Heart left ventricle (tissue), 16 donors: ENCODE measurements at regions of chr4 and their contacts with region 1.

Region 1: DNA sequence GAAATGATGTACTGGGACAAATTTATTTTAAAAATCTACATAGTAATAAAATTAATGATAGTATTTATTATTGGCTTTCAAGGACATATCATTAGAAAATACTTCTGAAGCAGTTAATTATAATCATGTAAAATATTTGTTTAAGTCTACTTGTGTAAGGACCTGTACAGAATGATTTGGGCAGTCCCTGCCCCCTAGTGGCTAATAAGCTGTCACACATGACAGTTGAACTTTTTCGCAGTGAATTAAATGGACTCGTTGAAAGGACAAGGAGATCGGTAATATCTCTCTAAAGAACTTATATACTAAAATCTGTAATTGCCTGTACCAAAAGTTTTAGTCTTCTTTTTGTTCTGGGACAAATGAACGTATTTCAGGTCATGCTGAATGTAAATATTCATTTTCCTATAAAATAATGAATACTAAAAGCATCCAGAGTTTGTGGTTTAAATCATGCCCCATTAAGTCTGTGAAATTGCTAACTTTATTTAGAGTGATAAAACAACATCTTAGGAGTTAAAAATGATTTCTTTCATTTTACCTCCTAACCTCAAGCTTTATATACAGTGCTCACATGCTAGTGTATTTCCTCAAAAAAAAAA is 13.6 kb downstream of the EXOC1 start:
- DNase-seq: no peak
- ATAC-seq: peak; percentile 79 to 91 (median 85)
- H3K4me3 ChIP-seq: peak overlapping the region in 1 of 12 donors; percentile 9
- H3K27ac ChIP-seq: peak overlapping the region in 8 of 12 donors; percentile 22 to 76 (median 58)
- H3K4me1 ChIP-seq: peaks cover 0 to 30% (median 15%) of the 10 kb centered on the region in 12 donors
- H3K27me3 ChIP-seq: no peaks in the 10 kb centered on the region
- CTCF ChIP-seq: peak; percentile 74 to 92 (median 86)
- POLR2A ChIP-seq: no peak

Region 2: GRCh38 chr4:54971474-54971950 is 895.6 kb before region 1 on chr4:
- intact Hi-C with region 1: loop called in 1 of 10 experiments (anchors 10 kb)
- DNase-seq: no peak
- ATAC-seq: peak in 3 of 4 donors; percentile 65 to 85 (median 69)
- H3K4me3 ChIP-seq: no peak overlapping the region
- H3K27ac ChIP-seq: no peak overlapping the region
- H3K4me1 ChIP-seq: peaks cover 0 to 3% (median 0%) of the 10 kb centered on the region in 12 donors
- H3K27me3 ChIP-seq: no peaks in the 10 kb centered on the region
- CTCF ChIP-seq: peak; percentile 58 to 82 (median 74)
- POLR2A ChIP-seq: no peak

Region 3: GRCh38 chr4:54999003-54999402 is 868.1 kb before region 1 on chr4:
- intact Hi-C with region 1: loop called in 1 of 10 experiments (anchors 5 kb)
- DNase-seq: no peak
- ATAC-seq: peak in 1 of 4 donors; percentile 74
- H3K4me3 ChIP-seq: no peak overlapping the region
- H3K27ac ChIP-seq: no peak overlapping the region
- H3K4me1 ChIP-seq: peaks cover 0 to 7% (median 2%) of the 10 kb centered on the region in 12 donors
- H3K27me3 ChIP-seq: no peaks in the 10 kb centered on the region
- CTCF ChIP-seq: peak; percentile 25 to 70 (median 58)
- POLR2A ChIP-seq: no peak

Region 4: GRCh38 chr4:55345980-55346850 is 520.9 kb before region 1 on chr4 and contains the start of gene SRD5A3:
- intact Hi-C with region 1: loop called in 5 of 10 experiments (anchors 2 to 10 kb)
- DNase-seq: peak; percentile 86 to 94 (median 88)
- ATAC-seq: peak; percentile 94 to 98 (median 96)
- H3K4me3 ChIP-seq: peak within 1 kb of the TSS; percentile 48 to 97 (median 80)
- H3K27ac ChIP-seq: peak within 1 kb of the TSS; percentile 89 to 100 (median 98)
- H3K4me1 ChIP-seq: peaks cover 4 to 31% (median 16%) of the 10 kb centered on the region in 12 donors
- H3K27me3 ChIP-seq: no peaks in the 10 kb centered on the region
- CTCF ChIP-seq: peak; percentile 90 to 99 (median 98)
- POLR2A ChIP-seq: peak in 1 of 2 donors; percentile 72
- total RNA-seq, gene SRD5A3: 4.5 to 16.8 (median 7.8) TPM

Region 5: DNA sequence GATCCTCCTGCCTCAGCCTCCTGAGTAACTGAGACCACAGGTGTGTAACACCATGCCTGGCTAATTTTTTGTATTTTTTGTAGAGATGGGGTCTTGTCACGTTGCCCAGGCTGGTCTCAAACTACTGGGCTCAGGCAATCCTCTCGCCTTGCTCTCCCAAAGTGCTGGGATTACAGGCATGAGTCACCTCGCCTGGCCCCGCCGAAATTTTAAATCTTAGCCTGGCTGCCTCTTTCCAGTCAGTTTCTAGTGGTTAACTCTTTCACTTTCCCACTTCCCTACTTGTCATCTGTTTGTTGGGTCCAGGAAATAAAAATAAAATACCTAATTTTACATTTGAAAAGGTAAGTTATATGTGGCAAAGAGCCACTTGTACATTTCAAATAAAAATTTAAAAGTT is 408.9 kb before region 1 on chr4:
- intact Hi-C with region 1: loop called in 2 of 10 experiments (anchors 10 kb)
- DNase-seq: no peak
- ATAC-seq: no peak
- H3K4me3 ChIP-seq: no peak overlapping the region
- H3K27ac ChIP-seq: no peak overlapping the region
- H3K4me1 ChIP-seq: no peaks in the 10 kb centered on the region
- H3K27me3 ChIP-seq: no peaks in the 10 kb centered on the region
- CTCF ChIP-seq: no peak
- POLR2A ChIP-seq: no peak

Region 6: GRCh38 chr4:55468724-55469123 is 398.4 kb before region 1 on chr4:
- intact Hi-C with region 1: loop called in 1 of 10 experiments (anchors 10 kb)
- DNase-seq: no peak
- ATAC-seq: no peak
- H3K4me3 ChIP-seq: no peak overlapping the region
- H3K27ac ChIP-seq: no peak overlapping the region
- H3K4me1 ChIP-seq: no peaks in the 10 kb centered on the region
- H3K27me3 ChIP-seq: no peaks in the 10 kb centered on the region
- CTCF ChIP-seq: no peak
- POLR2A ChIP-seq: no peak

Region 7: GRCh38 chr4:55801498-55801897 is 65.6 kb before region 1 on chr4:
- intact Hi-C with region 1: loop called in 1 of 10 experiments (anchors 2 kb)
- DNase-seq: no peak
- ATAC-seq: no peak
- H3K4me3 ChIP-seq: no peak overlapping the region
- H3K27ac ChIP-seq: no peak overlapping the region
- H3K4me1 ChIP-seq: no peaks in the 10 kb centered on the region
- H3K27me3 ChIP-seq: peaks cover 0 to 16% (median 0%) of the 10 kb centered on the region in 9 donors
- CTCF ChIP-seq: no peak
- POLR2A ChIP-seq: no peak